Right cardiac atrium (tissue), 5 donors: ENCODE measurements at regions of chr15 and their contacts with region 1.

Region 1: DNA sequence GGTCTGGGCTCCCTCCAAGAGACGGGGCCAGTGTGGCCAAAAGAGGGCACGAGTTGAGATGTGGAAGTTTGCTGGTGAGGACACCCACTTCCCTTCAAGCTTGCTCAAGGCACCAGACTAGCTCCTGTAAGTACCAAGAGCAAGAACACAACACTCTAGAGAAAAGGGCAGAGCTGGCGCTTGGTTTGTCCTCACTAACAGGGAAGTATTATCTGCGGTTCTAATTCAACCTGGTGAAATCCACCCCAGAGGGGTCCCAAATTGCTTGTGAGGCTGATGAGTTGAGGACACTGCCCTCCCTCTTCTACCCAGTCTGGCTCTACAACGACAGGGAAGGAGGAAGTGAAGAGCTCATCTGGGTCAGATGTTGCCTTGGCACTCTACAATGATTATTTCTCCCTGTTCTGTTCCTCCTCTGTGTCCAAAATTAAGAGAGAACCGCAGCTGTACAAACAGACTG is 16.9 kb upstream of the FSIP1 start:
- DNase-seq: no peak
- ATAC-seq: peak in 1 of 2 donors; percentile 23
- H3K4me3 ChIP-seq: no peak overlapping the region
- H3K27ac ChIP-seq: no peak overlapping the region
- H3K4me1 ChIP-seq: no peaks in the 10 kb centered on the region
- H3K27me3 ChIP-seq: no peaks in the 10 kb centered on the region

Region 2: DNA sequence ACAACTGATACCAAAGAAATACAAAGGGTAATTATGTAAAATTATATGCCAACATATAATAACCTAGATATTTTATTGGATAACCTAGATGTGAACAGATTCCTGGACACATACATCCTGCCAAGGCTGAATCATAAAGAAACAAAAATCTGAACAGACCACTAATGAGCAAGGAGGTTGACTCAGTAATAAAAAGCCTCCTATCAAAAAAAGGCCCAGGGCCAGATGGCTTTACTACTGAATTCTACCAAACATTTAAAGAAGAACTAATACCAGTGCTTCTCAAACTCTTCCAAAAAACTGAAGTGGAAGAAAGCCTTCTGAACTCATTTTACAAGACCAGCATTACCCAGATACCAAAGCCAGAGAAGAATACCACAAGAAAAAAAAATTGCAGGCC is 186.3 kb before region 1 on chr15:
- intact Hi-C with region 1: no loop called
- DNase-seq: no peak
- ATAC-seq: no peak
- H3K4me3 ChIP-seq: no peak overlapping the region
- H3K27ac ChIP-seq: no peak overlapping the region
- H3K4me1 ChIP-seq: no peaks in the 10 kb centered on the region
- H3K27me3 ChIP-seq: no peaks in the 10 kb centered on the region

Region 3: GRCh38 chr15:39747326-39747725 is 52.3 kb before region 1 on chr15:
- intact Hi-C with region 1: no loop called
- DNase-seq: no peak
- ATAC-seq: no peak
- H3K4me3 ChIP-seq: no peak overlapping the region
- H3K27ac ChIP-seq: no peak overlapping the region
- H3K4me1 ChIP-seq: no peaks in the 10 kb centered on the region
- H3K27me3 ChIP-seq: no peaks in the 10 kb centered on the region

Region 4: GRCh38 chr15:39874890-39875549 is 75.4 kb after region 1 on chr15:
- intact Hi-C with region 1: loop called in 1 of 4 experiments (anchors 10 kb)
- DNase-seq: no peak
- ATAC-seq: no peak
- H3K4me3 ChIP-seq: no peak overlapping the region
- H3K27ac ChIP-seq: no peak overlapping the region
- H3K4me1 ChIP-seq: peaks cover under 1% of the 10 kb centered on the region
- H3K27me3 ChIP-seq: no peaks in the 10 kb centered on the region